K562 (cell line): ENCODE measurements at regions of chrX and their contacts with region 1.

Region 1: DNA sequence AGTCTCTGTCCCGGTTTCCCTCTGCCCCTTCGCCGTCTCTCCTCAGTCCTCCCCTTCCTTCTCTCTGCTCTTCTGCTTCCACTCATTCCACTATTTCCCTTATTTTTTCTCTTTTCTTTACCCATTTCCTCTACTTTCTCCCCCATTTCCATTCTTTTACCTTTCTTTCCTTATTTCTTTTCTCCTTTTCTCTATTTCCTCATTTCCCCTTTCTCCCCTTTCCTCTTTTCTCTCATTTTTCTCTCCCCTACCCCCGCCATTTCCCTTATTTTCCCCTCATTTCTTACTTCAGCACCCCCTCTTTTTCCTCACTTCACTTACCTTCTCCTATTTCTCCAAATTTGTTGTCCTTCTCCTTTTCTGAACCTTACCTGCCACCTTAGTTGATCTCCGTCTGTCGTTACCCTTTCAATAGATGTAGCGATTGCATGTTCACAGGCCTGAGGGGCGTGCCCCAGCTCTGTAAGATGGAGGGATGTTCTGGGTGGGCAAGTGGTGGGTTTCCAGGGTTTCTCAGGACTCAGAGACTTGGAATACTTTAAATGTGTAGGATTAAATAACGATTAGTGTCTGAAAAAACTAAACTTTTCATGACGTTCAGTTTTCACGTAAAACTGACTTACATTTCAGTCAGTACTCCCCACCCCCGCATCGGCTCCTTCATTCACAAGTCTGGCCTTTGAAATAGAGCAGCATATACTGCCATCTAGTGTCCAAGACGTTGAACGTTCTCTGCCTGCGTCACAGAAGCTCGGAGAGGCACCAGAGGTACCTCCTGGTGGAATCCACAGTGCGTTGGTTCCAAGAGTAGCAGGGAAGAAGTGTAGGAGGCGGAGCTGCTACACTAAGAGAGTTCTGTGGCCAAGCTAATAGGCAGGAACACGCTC is 641 bp upstream of the NCBP2L start:
- DNase-seq: peak; percentile 72 to 84 (median 73)
- ATAC-seq: peak; percentile 87
- H3K4me3 ChIP-seq: peak overlapping the region; percentile 34; the same call in 1 of the 2 replicates
- H3K27ac ChIP-seq: no peak overlapping the region
- H3K4me1 ChIP-seq: peaks cover 4 to 18% of the 10 kb centered on the region in 2 experiments; a peak in 4 of 5 replicates
- H3K27me3 ChIP-seq: peaks cover 0 to 20% of the 10 kb centered on the region in 2 experiments; a peak in 3 of 5 replicates
- CTCF ChIP-seq: peak; percentile 77 to 86 (median 84)
- EP300 ChIP-seq: no peak
- POLR2A ChIP-seq: no peak
- RAD21 ChIP-seq: peak; percentile 83 to 86

Region 2: DNA sequence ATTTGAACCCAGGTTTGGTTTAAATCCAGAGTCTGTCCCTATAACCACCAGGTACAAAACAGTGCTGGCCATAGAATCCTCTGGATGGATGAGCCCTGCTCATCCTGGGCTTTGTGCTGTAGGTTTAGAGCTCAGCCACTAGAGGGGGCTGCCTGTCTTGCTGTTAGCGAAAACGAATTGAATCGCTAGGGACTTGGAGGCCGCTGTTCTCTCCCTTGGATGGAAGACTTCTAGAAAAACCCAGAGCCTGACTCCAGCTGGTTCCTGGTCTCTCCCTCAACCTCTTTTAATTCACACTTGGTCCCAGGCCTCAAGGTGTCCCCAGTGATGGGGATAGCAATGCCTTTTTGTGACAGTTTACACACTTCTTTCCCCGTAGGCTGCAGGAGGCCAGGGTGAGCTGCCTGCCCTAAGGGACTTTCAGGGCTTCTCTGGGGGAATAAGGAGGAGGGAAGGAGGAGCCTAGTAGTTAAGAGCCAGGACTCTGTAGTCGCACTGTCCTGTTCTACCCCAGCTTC is 882.4 kb before region 1 on chrX:
- CTCF ChIA-PET with region 1: no interaction called
- POLR2A ChIA-PET with region 1: no interaction called
- in situ Hi-C with region 1: no loop called
- intact Hi-C with region 1: loop called (anchors 10 kb)
- DNase-seq: peak; percentile 44 to 64 (median 56)
- ATAC-seq: peak; percentile 93
- H3K4me3 ChIP-seq: no peak overlapping the region
- H3K27ac ChIP-seq: no peak overlapping the region
- H3K4me1 ChIP-seq: no peaks in the 10 kb centered on the region
- H3K27me3 ChIP-seq: no peaks in the 10 kb centered on the region
- CTCF ChIP-seq: peak; percentile 75 to 81 (median 79)
- EP300 ChIP-seq: no peak
- POLR2A ChIP-seq: no peak
- RAD21 ChIP-seq: peak; percentile 43 to 68

Region 3: GRCh38 chrX:107654872-107655761 is 121.8 kb before region 1 on chrX:
- CTCF ChIA-PET with region 1: interaction called, 22 read pairs
- POLR2A ChIA-PET with region 1: interaction called, 4 read pairs
- in situ Hi-C with region 1: no loop called
- intact Hi-C with region 1: loop called (anchors 1 kb)
- DNase-seq: peak; percentile 57 to 75 (median 64)
- ATAC-seq: peak; percentile 95
- H3K4me3 ChIP-seq: peak overlapping the region; percentile 24; the same call in 1 of the 2 replicates
- H3K27ac ChIP-seq: peak overlapping the region; percentile 38; the same call in 1 of the 3 replicates
- H3K4me1 ChIP-seq: peaks cover 7 to 8% of the 10 kb centered on the region in 2 experiments; a peak in 3 of 5 replicates
- H3K27me3 ChIP-seq: no peaks in the 10 kb centered on the region
- CTCF ChIP-seq: peak; percentile 71 to 85 (median 83)
- EP300 ChIP-seq: no peak
- POLR2A ChIP-seq: no peak
- RAD21 ChIP-seq: peak; percentile 15 to 39; a peak in 2 of 4 replicates

Region 4: GRCh38 chrX:107718156-107718621 is 58.7 kb before region 1 on chrX:
- CTCF ChIA-PET with region 1: no interaction called
- POLR2A ChIA-PET with region 1: no interaction called
- in situ Hi-C with region 1: no loop called
- intact Hi-C with region 1: loop called (anchors 2 kb)
- DNase-seq: peak; percentile 68 to 77 (median 73)
- ATAC-seq: peak; percentile 74
- H3K4me3 ChIP-seq: no peak overlapping the region
- H3K27ac ChIP-seq: no peak overlapping the region; the same call in 2 of the 3 replicates
- H3K4me1 ChIP-seq: peaks cover 12 to 23% of the 10 kb centered on the region in 2 experiments; a peak in 4 of 5 replicates
- H3K27me3 ChIP-seq: no peaks in the 10 kb centered on the region
- CTCF ChIP-seq: peak; percentile 71 to 77 (median 76)
- EP300 ChIP-seq: peak; percentile 44; the same call in 1 of the 2 replicates
- POLR2A ChIP-seq: no peak
- RAD21 ChIP-seq: peak; percentile 62 to 76

Region 5: GRCh38 chrX:107894038-107894437 is 117.1 kb after region 1 on chrX:
- CTCF ChIA-PET with region 1: interaction called, 7 read pairs
- POLR2A ChIA-PET with region 1: no interaction called
- in situ Hi-C with region 1: no loop called
- intact Hi-C with region 1: loop called (anchors 5 kb)
- DNase-seq: peak; percentile 36 to 50 (median 44)
- ATAC-seq: peak; percentile 84
- H3K4me3 ChIP-seq: no peak overlapping the region
- H3K27ac ChIP-seq: no peak overlapping the region
- H3K4me1 ChIP-seq: no peaks in the 10 kb centered on the region
- H3K27me3 ChIP-seq: no peaks in the 10 kb centered on the region
- CTCF ChIP-seq: peak; percentile 44 to 50 (median 46); a peak in 4 of 6 replicates
- EP300 ChIP-seq: no peak
- POLR2A ChIP-seq: no peak
- RAD21 ChIP-seq: peak; percentile 65 to 79